ENCODE measurements at regions of chr18 and their contacts with region 1.

Region 1: DNA sequence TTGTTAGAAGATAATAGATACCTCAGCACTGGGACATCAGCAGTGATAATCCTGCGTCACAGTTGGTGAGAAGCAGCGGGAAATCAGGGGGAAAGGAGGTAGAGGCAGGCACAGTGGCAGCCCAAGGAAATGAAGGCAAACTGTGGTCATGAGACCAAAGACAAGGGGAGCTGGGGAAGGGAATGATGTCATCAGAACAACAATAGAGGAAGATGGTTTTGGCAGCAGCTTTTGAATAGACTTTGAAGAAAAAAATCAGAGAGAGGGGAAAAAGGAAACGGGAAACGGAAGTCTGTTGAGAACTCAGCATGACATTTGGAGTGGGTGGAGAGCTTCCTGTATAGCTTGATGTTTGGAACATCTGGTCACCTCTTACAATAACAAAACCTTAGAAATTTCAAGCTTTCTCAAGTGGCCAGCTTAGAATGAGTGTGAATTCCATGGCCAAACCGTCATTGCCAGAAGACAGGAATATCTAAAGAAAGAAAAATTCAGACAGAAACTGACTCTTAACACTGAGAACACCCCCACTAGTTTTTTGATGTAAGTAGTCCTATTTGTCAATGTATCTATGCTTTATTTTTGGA is 18.4 kb upstream of the YES1 start:
- DNase-seq: peak; percentile 58
- H3K4me3 Mint-ChIP-seq: peak overlapping the region; percentile 16
- H3K27ac Mint-ChIP-seq: peak overlapping the region; percentile 70
- H3K4me1 Mint-ChIP-seq: peaks cover 39% of the 10 kb centered on the region
- H3K27me3 Mint-ChIP-seq: peaks cover 8% of the 10 kb centered on the region

Region 2: DNA sequence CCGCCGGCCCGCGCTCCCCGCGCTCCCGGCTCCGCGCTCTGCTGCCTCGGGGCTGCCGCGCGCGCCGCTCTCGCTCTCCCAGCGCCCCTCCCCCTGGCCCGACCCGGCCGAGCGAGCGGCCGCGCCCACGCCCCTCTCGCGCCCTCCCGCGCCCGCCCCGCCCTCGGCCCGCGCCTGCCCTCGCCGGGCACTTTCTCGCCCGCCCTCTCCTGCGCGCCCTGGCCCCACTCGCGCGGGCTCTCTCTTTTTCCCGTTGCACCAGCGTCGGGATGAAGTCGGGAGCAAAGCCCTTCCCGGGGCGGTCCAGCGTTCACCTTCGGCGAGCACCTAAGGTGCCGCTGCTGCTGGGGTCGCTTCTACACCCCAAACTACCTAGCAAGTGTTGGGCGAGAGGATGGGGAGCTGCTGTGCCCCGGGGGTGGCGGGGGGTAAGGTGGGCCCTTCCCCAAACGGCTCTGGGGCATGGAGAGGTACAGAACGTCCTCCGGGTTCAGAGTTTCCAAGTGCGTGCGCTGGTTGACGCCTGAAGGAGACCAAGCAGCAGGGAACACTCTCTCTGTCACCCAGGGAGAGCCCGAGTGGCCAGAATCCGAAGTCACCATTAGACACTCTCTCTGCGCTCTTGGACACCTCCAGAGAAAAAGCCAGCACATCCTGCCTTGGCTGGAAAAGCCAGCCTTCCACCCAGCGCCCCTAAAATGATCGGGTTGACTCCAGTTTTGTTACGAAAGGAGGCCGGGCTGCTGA is 329.6 kb before region 1 on chr18 and contains the start of gene COLEC12:
- CTCF ChIA-PET with region 1: no interaction called
- DNase-seq: no peak
- H3K4me3 Mint-ChIP-seq: no peak within 1 kb of the TSS
- H3K27ac Mint-ChIP-seq: no peak within 1 kb of the TSS
- H3K4me1 Mint-ChIP-seq: peaks cover 8% of the 10 kb centered on the region
- H3K27me3 Mint-ChIP-seq: peaks cover 66% of the 10 kb centered on the region

Region 3: DNA sequence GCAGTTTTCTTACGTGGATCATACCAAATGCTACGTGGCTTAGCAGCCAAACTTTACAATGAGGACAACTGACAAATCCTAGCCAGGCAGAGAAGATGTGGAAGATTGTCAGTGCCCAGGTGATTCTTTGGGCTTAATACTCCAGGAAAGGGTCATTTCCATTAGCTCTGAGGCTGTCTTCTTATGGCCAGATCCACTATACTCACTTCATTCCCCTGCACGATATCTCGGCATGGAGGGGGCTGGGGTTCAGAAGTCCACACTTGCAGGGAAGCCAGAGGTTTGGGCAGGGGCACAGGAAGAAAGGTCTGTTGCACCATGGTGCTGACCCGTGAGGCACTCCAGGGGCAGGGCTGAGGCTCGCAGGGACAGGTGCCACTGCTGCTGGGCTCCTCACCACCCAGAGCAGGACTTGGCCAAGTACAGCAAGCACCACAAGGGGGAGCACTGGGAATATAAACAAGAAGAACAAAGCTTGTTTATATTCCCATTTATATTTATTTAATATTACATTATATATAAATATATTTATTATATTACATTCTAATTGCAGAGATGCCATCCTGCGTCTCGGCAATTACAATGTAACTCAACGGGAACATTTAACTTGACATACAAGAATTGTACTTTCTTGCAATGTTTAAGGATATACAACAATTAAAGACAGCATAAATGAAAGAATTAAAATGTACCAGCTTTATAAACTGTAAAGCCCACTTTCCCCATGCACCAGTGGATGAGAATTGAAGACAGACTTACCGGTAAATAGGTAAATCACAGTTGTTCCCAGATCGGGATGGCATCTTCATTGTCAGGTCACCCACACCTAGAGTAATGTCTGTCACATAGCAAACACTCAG is 206.4 kb before region 1 on chr18:
- CTCF ChIA-PET with region 1: interaction called, 89 read pairs
- DNase-seq: peak; percentile 79
- H3K4me3 Mint-ChIP-seq: no peak overlapping the region
- H3K27ac Mint-ChIP-seq: no peak overlapping the region
- H3K4me1 Mint-ChIP-seq: no peaks in the 10 kb centered on the region
- H3K27me3 Mint-ChIP-seq: peaks cover 36% of the 10 kb centered on the region

Region 4: DNA sequence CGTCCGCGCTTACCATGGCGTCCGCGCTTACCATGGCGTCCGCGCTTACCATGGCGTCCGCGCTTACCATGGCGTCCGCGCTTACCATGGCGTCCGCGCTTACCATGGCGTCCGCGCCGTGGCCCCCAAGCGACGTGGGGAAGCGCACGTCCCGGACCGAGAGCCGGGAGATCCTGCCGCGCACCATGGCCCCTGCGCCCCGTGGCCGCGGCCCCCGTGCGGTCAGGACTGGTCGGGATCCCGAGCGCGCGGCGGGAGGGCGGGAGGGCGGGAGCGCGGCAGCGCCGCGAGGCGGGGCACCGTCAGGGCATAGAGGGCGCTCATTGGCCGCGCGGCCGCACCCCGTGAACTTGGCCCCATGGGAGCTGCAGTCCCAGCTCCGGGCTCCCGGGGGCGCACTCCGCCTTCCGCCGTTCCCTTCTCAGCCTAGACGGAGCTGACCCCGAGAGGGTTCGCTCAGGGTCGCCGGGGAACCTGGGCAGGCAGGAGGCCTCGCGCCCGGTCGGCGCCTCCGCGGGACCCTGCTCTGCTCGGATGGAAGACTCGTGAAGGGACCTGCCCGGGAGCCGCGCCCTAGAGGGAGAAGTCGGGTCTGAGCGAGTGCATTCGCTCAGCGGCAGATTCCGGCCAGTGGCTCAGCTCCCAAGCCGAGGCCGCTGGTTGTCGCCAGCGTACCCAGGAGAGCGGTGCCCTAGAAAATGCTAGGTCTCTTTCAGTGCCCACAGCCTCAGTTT is 117.8 kb before region 1 on chr18 and contains the start of gene ENOSF1:
- CTCF ChIA-PET with region 1: interaction called, 71 read pairs
- DNase-seq: peak; percentile 90
- H3K4me3 Mint-ChIP-seq: peak within 1 kb of the TSS; percentile 82
- H3K27ac Mint-ChIP-seq: peak within 1 kb of the TSS; percentile 96
- H3K4me1 Mint-ChIP-seq: peaks cover 44% of the 10 kb centered on the region
- H3K27me3 Mint-ChIP-seq: peaks cover 14% of the 10 kb centered on the region

Region 5: GRCh38 chr18:741931-742512 is 88.4 kb before region 1 on chr18:
- CTCF ChIA-PET with region 1: interaction called, 180 read pairs
- DNase-seq: no peak
- H3K4me3 Mint-ChIP-seq: no peak overlapping the region
- H3K27ac Mint-ChIP-seq: no peak overlapping the region
- H3K4me1 Mint-ChIP-seq: peaks cover 5% of the 10 kb centered on the region
- H3K27me3 Mint-ChIP-seq: no peaks in the 10 kb centered on the region

Region 6: DNA sequence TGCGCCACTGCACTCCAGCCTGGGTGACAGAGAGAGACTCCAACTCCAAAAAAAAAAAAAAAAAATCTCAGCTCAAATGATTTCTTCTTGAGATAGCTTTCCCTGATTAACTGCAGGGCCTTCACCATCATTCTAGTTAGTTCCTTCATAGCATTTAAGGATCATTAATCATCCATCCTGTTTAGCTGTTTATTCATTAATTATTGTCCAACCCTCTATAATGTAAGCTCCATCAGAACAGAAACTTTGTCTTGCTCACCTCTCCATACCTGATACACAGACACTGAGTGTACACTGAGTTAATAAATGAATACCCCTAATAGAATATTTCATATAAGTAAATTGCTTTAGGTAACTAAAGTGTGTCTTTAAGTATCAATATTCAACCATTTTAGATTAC is 75.7 kb before region 1 on chr18:
- CTCF ChIA-PET with region 1: interaction called, 18 read pairs
- DNase-seq: no peak
- H3K4me3 Mint-ChIP-seq: no peak overlapping the region
- H3K27ac Mint-ChIP-seq: no peak overlapping the region
- H3K4me1 Mint-ChIP-seq: no peaks in the 10 kb centered on the region
- H3K27me3 Mint-ChIP-seq: no peaks in the 10 kb centered on the region

Region 7: GRCh38 chr18:805008-805754 is 25.2 kb before region 1 on chr18:
- CTCF ChIA-PET with region 1: interaction called, 67 read pairs
- DNase-seq: no peak
- H3K4me3 Mint-ChIP-seq: peak overlapping the region; percentile 64
- H3K27ac Mint-ChIP-seq: peak overlapping the region; percentile 70
- H3K4me1 Mint-ChIP-seq: peaks cover 70% of the 10 kb centered on the region
- H3K27me3 Mint-ChIP-seq: no peaks in the 10 kb centered on the region

Region 8: DNA sequence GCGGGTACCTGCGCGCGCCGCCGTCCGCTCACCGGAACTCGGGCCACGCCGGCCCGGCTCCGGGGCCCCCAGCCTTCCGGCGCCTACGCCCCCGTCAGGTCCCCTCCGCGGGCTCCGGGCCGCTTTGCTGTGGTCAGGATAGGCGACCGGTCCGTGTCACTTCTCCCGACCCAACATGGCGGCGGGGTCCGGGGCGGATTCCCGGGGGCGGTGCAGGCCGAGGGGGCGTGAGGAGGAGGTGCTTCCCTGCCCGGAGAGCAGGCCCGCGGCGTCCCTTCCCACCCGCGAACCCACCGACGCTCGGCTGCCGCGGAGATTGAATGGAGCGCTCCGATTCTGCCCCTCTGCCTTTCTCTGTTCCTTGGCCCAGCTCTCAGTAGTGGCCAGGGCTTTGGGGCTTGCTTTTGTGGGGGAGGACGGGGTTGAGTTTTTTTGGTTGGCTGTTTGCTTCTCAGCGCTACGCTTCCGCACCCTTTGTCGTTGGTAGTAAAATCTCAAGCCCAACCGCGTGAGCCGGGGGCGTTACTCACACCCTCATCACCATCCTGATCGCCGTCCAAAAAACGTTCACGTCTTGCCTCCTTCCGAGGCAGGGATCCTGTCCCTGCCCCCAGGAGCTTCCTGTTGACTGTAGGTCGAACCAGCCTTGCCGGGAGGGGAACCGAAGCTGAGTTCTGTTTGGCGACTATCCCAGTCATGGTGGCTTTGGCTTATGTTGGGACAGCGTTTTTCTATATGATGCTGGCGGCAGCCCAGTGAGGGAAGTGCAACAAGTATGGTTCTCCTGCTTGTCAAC is 17.8 kb before region 1 on chr18:
- CTCF ChIA-PET with region 1: interaction called, 67 read pairs
- DNase-seq: peak; percentile 85
- H3K4me3 Mint-ChIP-seq: peak overlapping the region; percentile 84
- H3K27ac Mint-ChIP-seq: peak overlapping the region; percentile 99
- H3K4me1 Mint-ChIP-seq: peaks cover 76% of the 10 kb centered on the region
- H3K27me3 Mint-ChIP-seq: peaks cover 8% of the 10 kb centered on the region

Region 9: DNA sequence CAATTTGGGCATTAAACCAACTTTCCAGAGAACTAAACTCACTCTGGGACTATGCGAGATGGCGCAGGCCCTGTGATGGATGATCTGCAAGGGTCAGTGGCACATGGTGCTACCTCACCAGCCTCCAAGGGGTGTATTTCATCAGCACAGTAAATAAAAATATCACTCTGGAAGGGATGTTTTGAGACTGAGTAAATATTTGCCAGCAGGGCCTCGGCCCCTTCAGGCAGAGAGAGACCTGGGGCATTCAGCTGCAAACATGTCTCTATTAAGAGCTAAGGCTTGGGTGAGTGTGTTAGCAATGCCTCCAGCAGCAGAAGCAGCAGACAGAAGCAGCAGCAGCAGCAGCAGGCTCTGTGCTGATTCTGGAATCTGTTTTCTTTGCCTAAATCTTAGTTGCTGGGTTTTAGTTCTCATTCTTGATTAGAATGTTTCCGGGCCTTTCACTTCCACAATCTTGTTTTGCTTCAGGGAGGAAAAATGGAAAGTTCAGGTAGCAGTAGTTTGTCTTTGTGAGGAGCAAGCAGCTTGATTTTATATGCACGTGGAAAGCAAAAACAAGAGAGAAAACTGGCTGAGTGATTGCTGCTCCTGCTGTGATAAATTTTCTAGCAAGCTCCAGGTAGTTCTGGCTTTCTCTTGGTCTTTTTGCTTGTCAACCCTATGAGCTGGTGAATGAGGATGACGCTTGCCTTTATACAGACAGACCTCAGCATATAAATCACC is 92.9 kb after region 1 on chr18:
- CTCF ChIA-PET with region 1: no interaction called
- DNase-seq: no peak
- H3K4me3 Mint-ChIP-seq: no peak overlapping the region
- H3K27ac Mint-ChIP-seq: no peak overlapping the region
- H3K4me1 Mint-ChIP-seq: no peaks in the 10 kb centered on the region
- H3K27me3 Mint-ChIP-seq: peaks cover 7% of the 10 kb centered on the region